ENCODE measurements at regions of chr11 and their contacts with region 1.

Region 1: GRCh38 chr11:77127232-77127911 is 674 bp upstream of the MYO7A start:
- DNase-seq: peak; percentile 86
- H3K4me3 ChIP-seq: peak overlapping the region; percentile 28 to 64 (median 34)
- H3K27ac ChIP-seq: no peak overlapping the region
- H3K4me1 ChIP-seq: peaks cover 13 to 22% (median 18%) of the 10 kb centered on the region in 6 donors
- H3K27me3 ChIP-seq: peaks cover 0 to 27% (median 0%) of the 10 kb centered on the region in 7 donors
- CTCF ChIP-seq: peak; percentile 78 to 98 (median 96)
- POLR2A ChIP-seq: no peak

Region 2: DNA sequence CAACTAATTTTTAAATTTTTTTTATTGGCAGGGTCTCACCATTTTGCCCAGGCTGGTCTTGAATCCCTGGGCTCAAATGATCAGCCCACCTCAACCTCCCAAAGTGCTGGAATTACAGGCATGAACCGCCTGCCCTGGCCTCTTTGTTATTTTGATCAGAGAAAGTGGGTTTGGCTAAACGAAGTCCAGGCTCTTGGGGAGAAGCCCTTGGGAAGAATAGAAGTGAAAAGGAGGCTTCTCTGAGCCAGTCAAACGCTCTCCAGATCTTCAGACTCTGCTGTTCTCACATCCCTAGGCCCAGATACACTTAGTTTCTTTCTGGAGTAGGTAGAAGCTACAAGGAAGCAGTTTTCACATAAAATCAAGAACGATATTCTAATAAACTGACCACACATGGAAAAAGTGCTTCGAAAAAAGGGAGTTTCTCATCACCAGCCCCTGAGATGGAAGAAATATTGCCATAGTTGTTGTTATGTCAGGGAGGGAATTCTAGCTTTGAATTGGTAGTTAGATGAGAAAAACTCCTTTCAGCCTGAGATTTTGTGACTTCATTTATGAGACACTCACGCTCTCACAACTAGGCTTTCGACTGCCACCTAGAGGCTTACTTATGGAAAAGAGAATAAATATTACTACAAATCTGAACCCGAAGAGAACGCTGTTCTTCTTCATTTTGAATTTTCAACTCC is 420.6 kb after region 1 on chr11:
- intact Hi-C with region 1: loop called (anchors 5 kb)
- DNase-seq: no peak
- H3K4me3 ChIP-seq: no peak overlapping the region
- H3K27ac ChIP-seq: no peak overlapping the region
- H3K4me1 ChIP-seq: peaks cover 0 to 8% (median 2%) of the 10 kb centered on the region in 6 donors
- H3K27me3 ChIP-seq: no peaks in the 10 kb centered on the region
- CTCF ChIP-seq: peak in 9 of 11 experiments; percentile 29 to 68 (median 55)
- POLR2A ChIP-seq: no peak